HepG2 (cell line): ENCODE measurements at regions of chr9 and their contacts with region 1.

Region 1: DNA sequence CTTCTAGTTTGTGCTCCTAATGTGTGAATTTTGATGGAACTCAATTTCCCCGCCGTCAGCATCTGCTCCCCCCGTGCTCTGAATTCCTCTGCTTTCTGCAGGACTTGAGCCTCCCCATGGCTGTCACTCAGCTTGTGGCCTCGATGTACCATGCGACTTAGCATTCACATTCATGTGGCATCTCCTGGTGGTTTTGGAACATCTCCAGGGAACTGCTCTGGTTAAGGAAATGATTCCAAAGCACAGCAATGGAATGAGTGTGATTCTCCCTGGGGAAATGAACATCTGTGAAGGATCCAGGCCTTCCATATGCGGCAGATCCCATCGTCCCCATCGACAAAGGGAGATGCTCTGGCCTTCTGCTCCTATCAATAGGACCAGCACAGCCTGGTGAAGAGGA is 119.0 kb downstream of the ENTREP1 start:
- DNase-seq: no peak
- ATAC-seq: no peak
- H3K4me3 ChIP-seq: no peak overlapping the region
- H3K27ac ChIP-seq: no peak overlapping the region
- H3K4me1 ChIP-seq: no peaks in the 10 kb centered on the region
- H3K27me3 ChIP-seq: peaks cover 2 to 9% of the 10 kb centered on the region in 2 experiments; a peak in 3 of 5 replicates
- CTCF ChIP-seq: no peak
- EP300 ChIP-seq: no peak
- POLR2A ChIP-seq: no peak
- RAD21 ChIP-seq: no peak

Region 2: DNA sequence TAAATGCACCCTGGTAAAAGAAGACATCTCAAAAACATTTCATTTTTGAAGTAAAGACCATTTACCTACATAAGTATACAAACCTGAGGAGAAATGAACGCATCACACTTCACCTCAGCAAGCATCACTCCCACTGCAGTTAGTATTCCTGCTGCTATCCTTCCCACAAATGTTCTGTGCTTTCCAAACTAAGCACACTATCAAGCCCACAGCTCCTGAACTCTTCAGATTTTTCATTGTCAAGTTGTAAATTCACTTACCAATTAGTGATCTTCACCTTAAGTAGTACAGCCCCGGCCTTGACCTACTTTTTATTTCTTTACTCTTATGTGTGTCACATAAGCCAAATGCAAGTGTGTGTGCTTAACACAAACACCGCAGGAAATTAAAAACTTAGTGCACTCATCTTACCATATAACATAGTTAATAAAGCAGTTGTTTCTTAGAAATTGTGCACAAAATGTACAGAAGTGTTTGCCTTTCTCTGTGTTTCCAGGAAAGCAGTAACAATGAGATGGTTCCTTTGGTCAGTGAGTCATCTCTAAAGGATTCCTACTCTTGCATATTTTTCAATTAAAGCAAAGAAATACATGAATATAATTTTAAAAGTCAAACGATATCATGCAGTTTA is 58.8 kb after region 1 on chr9:
- CTCF ChIA-PET with region 1: no interaction called
- POLR2A ChIA-PET with region 1: no interaction called
- in situ Hi-C with region 1: loop called (anchors 5 kb)
- intact Hi-C with region 1: no loop called
- DNase-seq: no peak
- ATAC-seq: no peak
- H3K4me3 ChIP-seq: no peak overlapping the region
- H3K27ac ChIP-seq: no peak overlapping the region
- H3K4me1 ChIP-seq: no peaks in the 10 kb centered on the region
- H3K27me3 ChIP-seq: peaks cover 0 to 37% of the 10 kb centered on the region in 2 experiments; a peak in 3 of 5 replicates
- CTCF ChIP-seq: no peak
- EP300 ChIP-seq: no peak
- POLR2A ChIP-seq: no peak
- RAD21 ChIP-seq: no peak

Region 3: DNA sequence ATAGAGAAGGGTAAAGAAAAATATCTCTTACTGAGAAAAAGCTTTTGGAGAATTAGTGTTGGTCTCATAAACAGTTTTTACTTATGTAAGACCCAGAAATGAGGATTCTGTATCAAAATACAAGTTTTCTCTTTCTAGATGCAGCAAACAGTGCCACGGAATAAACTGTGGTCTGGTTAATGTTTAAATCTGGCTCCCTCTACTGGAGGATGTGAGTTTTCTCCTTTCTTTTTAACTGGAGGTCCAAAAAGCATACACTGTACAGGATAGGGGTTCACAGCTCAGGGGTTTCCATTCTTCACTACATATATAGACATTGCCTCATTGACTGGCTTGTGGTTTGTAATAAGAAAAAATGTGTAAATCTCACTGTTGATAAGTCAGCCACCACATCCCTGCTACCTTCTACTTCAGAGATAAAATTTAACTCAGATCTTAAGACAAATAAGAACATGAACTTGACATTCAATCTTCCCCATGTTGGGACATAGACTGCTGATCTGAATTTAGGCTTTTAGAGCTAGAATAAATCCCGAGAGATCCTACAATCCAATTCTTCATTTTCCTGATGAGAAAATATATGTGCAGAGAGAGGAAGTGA is 475.5 kb after region 1 on chr9:
- CTCF ChIA-PET with region 1: no interaction called
- POLR2A ChIA-PET with region 1: no interaction called
- in situ Hi-C with region 1: loop called (anchors 25 kb)
- intact Hi-C with region 1: no loop called
- DNase-seq: peak; percentile 50
- ATAC-seq: peak; percentile 89
- H3K4me3 ChIP-seq: no peak overlapping the region
- H3K27ac ChIP-seq: no peak overlapping the region
- H3K4me1 ChIP-seq: no peaks in the 10 kb centered on the region
- H3K27me3 ChIP-seq: no peaks in the 10 kb centered on the region; a peak in 1 of 5 replicates
- CTCF ChIP-seq: peak; percentile 67
- EP300 ChIP-seq: no peak
- POLR2A ChIP-seq: no peak
- RAD21 ChIP-seq: no peak